PC-9 (cell line): ENCODE measurements at regions of chr6 and their contacts with region 1.

Region 1: GRCh38 chr6:26025894-26026832 is 61.1 kb upstream of the HFE start:
- DNase-seq: peak; percentile 92 to 93
- H3K4me3 ChIP-seq: peak overlapping the region; percentile 75
- H3K27ac ChIP-seq: peak overlapping the region; percentile 98
- H3K4me1 ChIP-seq: peaks cover 57% of the 10 kb centered on the region
- H3K27me3 ChIP-seq: no peaks in the 10 kb centered on the region
- CTCF ChIP-seq: peak; percentile 89

Region 2: DNA sequence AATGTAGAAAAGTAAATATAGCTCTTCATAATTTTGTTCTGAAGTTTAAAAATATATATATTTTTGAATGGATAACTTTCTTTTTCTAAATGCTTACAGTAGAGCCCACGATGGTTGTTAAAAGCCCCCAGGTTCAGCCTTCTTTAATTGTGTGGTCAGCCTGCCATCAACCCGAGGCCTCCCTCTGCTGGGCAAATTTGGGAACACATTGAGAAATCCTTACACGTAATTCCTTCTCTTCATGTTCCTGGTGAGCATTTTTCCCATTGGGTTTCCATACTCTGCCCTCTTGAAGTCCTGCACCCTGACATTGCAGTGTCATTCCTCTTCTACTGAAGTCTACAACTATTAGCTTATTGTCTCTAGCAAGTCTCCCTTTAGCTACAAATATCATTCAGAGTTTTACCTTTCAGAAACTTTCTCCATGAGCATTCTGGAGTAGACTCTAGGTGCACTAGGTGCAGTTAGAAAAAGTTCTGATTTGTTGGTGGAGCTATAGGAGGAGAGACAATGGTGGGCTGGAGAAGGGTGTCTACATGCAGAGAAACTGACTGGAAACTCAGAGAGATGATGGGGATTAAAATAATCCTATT is 23.0 kb before region 1 on chr6:
- CTCF ChIA-PET with region 1: interaction called, 5 read pairs
- POLR2A ChIA-PET with region 1: interaction called, 20 read pairs
- intact Hi-C with region 1: no loop called
- DNase-seq: peak in 1 of 2 experiments; percentile 61
- H3K4me3 ChIP-seq: no peak overlapping the region
- H3K27ac ChIP-seq: no peak overlapping the region
- H3K4me1 ChIP-seq: no peaks in the 10 kb centered on the region
- H3K27me3 ChIP-seq: no peaks in the 10 kb centered on the region
- CTCF ChIP-seq: peak; percentile 87

Region 3: GRCh38 chr6:26122793-26123674 is 96.9 kb after region 1 on chr6:
- CTCF ChIA-PET with region 1: no interaction called
- POLR2A ChIA-PET with region 1: interaction called, 78 read pairs
- intact Hi-C with region 1: loop called (anchors 1 kb)
- DNase-seq: peak; percentile 91 to 98
- H3K4me3 ChIP-seq: peak overlapping the region; percentile 86
- H3K27ac ChIP-seq: peak overlapping the region; percentile 78
- H3K4me1 ChIP-seq: peaks cover 22% of the 10 kb centered on the region
- H3K27me3 ChIP-seq: no peaks in the 10 kb centered on the region
- CTCF ChIP-seq: no peak

Region 4: GRCh38 chr6:26216356-26216885 is 190.3 kb after region 1 on chr6:
- CTCF ChIA-PET with region 1: no interaction called
- POLR2A ChIA-PET with region 1: interaction called, 18 read pairs
- intact Hi-C with region 1: no loop called
- DNase-seq: peak; percentile 65 to 95
- H3K4me3 ChIP-seq: peak overlapping the region; percentile 72
- H3K27ac ChIP-seq: peak overlapping the region; percentile 80
- H3K4me1 ChIP-seq: 0 out of 2 replicates have a peak, but pooled peaks cover 14% of the 10 kb centered on the region
- H3K27me3 ChIP-seq: no peaks in the 10 kb centered on the region
- CTCF ChIP-seq: no peak

Region 5: GRCh38 chr6:27617700-27618689 is 1591.8 kb after region 1 on chr6:
- CTCF ChIA-PET with region 1: no interaction called
- POLR2A ChIA-PET with region 1: no interaction called
- intact Hi-C with region 1: no loop called
- DNase-seq: peak; percentile 50 to 60
- H3K4me3 ChIP-seq: peak overlapping the region; percentile 78
- H3K27ac ChIP-seq: peak overlapping the region; percentile 30
- H3K4me1 ChIP-seq: peaks cover 8% of the 10 kb centered on the region
- H3K27me3 ChIP-seq: no peaks in the 10 kb centered on the region
- CTCF ChIP-seq: 0 out of 2 replicates have a peak, but pooled peaks have one; percentile 28

Region 6: GRCh38 chr6:27838058-27838944 is 1812.1 kb after region 1 on chr6:
- CTCF ChIA-PET with region 1: no interaction called
- POLR2A ChIA-PET with region 1: no interaction called
- intact Hi-C with region 1: loop called (anchors 10 kb)
- DNase-seq: peak; percentile 71 to 85
- H3K4me3 ChIP-seq: peak overlapping the region; percentile 58
- H3K27ac ChIP-seq: peak overlapping the region; percentile 87
- H3K4me1 ChIP-seq: no peaks in the 10 kb centered on the region
- H3K27me3 ChIP-seq: no peaks in the 10 kb centered on the region
- CTCF ChIP-seq: no peak